ENCODE measurements at regions of chr3 and their contacts with region 1.

Region 1: DNA sequence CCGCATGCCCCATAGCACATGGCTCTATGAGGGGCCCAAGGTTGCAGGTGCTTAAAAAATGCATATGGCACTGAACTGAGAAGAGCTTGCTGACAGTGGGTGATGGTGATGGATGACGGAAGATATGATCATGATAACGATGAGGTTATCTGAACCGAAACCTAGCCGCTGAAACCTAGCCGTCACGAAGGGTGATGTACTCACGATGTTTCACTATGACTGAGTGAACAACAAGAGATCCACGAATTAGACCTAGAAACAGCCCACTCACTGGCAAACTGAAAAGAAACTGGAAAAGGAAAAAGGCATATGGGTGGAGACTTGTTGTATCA is 57.6 kb upstream of the BCL6 start:
- DNase-seq: peak; percentile 89
- H3K4me3 Mint-ChIP-seq: peak overlapping the region; percentile 1
- H3K27ac Mint-ChIP-seq: peak overlapping the region; percentile 79
- H3K4me1 Mint-ChIP-seq: peaks cover 95% of the 10 kb centered on the region
- H3K27me3 Mint-ChIP-seq: no peaks in the 10 kb centered on the region

Region 2: DNA sequence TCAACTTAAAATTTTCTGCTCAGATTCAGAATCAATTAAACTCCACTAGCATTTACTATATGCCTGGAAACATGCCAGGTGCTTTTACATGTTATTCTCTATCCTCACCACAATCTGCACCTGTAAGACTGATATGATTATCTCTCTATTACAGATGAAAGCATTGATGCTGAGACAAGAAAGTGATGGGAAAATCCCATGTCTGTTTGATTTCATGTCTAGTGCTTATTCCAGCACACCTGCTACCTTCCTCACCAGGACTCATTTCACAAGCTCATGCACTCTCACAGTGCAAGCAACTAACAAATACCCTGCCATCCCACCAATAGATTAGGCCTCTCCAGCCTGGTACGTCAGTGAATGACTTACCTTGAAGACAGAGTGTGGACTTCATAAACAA is 32.7 kb before region 1 on chr3:
- CTCF ChIA-PET with region 1: interaction called, 4 read pairs
- intact Hi-C with region 1: loop called (anchors 1 kb)
- DNase-seq: peak; percentile 73
- H3K4me3 Mint-ChIP-seq: no peak overlapping the region
- H3K27ac Mint-ChIP-seq: peak overlapping the region; percentile 82
- H3K4me1 Mint-ChIP-seq: peaks cover 38% of the 10 kb centered on the region
- H3K27me3 Mint-ChIP-seq: no peaks in the 10 kb centered on the region

Region 3: GRCh38 chr3:187788984-187789857 is 13.7 kb before region 1 on chr3:
- CTCF ChIA-PET with region 1: interaction called, 5 read pairs
- intact Hi-C with region 1: loop called (anchors 1 kb)
- DNase-seq: peak; percentile 59
- H3K4me3 Mint-ChIP-seq: no peak overlapping the region
- H3K27ac Mint-ChIP-seq: peak overlapping the region; percentile 69
- H3K4me1 Mint-ChIP-seq: peaks cover 28% of the 10 kb centered on the region
- H3K27me3 Mint-ChIP-seq: no peaks in the 10 kb centered on the region

Region 4: DNA sequence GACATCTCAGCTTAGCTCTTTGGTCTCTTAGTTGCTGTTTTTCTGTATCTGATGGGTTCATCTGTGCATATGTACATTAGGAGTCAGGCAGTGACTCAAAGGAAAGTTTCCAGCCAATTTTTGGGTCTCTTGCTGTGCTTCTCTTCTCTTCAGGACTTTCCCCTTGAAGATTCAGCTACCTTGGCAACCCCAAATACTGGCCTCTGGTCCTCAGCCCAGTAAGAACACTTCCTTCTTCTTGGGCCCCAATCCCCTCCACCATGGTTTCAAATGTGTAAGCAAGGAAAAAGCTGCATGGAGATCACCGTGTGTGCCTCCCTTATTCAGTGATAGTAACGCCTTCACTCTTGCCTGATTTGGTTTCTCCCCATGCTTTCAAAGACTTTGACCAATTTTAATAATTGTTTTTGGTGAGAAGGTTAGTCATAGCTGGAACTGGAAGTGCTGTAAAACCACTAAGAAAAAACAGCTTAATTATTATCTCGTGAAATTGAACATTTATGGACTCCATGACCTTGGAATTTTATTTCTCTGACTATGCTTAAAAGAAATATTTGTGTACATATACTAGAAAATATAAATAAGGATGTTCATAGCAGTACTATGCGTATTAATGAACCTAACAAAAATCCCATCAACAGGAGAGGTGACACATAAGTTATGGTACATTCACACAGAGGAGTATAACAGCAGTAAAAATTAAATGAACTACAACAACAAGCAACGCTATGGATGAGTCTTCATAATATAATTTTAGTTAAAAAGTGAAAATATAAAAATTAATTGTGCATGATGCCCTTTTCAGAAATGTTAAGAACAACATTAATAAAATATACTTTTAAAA is 67.7 kb after region 1 on chr3:
- CTCF ChIA-PET with region 1: no interaction called
- intact Hi-C with region 1: loop called (anchors 1 kb)
- DNase-seq: peak; percentile 34
- H3K4me3 Mint-ChIP-seq: no peak overlapping the region
- H3K27ac Mint-ChIP-seq: peak overlapping the region; percentile 37
- H3K4me1 Mint-ChIP-seq: peaks cover 12% of the 10 kb centered on the region
- H3K27me3 Mint-ChIP-seq: no peaks in the 10 kb centered on the region

Region 5: DNA sequence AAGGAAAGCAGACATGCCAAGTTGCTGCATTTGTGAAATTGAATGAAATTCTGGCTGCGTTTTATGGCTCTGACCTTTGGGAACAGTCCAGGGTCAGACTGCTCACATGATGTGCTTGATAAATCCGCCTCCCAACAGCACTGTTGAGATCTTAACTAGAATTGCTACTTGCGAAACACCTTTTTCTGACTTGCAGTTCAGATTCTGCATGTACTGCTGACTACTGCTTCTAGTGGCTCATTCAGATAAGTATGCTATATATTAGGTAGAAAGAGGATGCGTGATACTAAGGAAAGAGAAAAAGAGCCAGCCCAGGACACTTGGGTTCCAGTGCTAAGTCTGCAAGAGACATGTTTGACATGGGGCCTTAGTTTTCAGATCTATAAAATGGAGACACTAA is 480.5 kb after region 1 on chr3:
- CTCF ChIA-PET with region 1: no interaction called
- intact Hi-C with region 1: no loop called
- DNase-seq: no peak
- H3K4me3 Mint-ChIP-seq: no peak overlapping the region
- H3K27ac Mint-ChIP-seq: no peak overlapping the region
- H3K4me1 Mint-ChIP-seq: peaks cover 49% of the 10 kb centered on the region
- H3K27me3 Mint-ChIP-seq: no peaks in the 10 kb centered on the region

Region 6: DNA sequence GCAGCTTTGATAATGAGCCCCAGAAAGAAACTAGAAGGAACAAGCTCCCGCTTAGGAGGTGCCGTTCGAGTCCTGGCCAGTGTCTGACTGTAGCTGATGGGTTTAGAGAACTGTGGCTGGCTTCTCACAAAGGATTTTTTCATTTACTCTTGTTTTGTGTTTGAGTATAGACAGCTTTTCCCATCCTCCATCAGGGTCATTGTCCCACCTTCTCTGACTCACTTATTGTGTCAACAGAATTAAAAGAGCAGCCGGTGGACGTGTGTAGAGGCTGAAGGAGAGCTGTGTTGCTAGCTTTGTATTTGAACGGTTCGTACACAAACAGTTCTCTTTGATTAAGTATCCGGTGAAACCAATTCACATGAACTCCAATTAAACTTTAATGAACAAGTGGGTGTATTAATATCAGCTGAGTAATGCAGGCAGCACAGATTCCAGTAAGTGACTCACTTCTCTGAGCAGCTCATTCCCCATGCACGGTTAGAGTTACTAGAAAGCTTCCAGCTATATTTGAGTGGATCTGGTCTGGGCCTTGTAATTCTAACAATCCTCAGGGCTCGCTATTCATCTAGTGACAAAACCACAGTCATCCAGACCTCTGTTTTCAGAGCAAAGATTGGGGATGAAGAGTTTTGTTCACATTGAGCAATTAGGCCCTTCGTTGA is 492.1 kb after region 1 on chr3:
- CTCF ChIA-PET with region 1: no interaction called
- intact Hi-C with region 1: loop called (anchors 5 kb)
- DNase-seq: peak; percentile 49
- H3K4me3 Mint-ChIP-seq: no peak overlapping the region
- H3K27ac Mint-ChIP-seq: peak overlapping the region; percentile 69
- H3K4me1 Mint-ChIP-seq: peaks cover 85% of the 10 kb centered on the region
- H3K27me3 Mint-ChIP-seq: no peaks in the 10 kb centered on the region

Measured in activated naive CD4-positive, alpha-beta T cell treated with anti-CD3 and anti-CD28 coated beads for 36 hours (primary cell).